ENCODE measurements at regions of chr5 and their contacts with region 1.

Region 1: DNA sequence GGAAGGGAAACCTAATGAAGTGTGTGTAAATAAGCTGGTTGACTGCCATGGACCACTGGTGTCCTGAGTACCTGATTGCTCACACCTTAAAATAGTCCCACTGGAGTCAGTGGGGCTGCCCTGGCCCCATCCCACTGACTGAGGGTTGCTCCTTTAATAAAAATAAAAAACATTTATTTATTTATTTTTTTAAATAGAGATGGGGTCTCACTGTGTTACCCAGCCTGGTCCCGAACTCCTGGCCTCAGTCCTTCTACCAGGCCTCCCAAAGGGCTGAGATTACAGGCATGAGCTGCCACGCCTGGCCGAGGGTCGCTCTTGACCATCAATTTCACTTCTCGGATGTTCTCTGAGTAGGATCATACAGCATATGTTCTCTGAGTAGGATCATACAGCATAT is 394.2 kb upstream of the IRX2 start:
- DNase-seq: no peak
- H3K4me3 ChIP-seq: no peak overlapping the region
- H3K27ac ChIP-seq: no peak overlapping the region
- H3K4me1 ChIP-seq: no peaks in the 10 kb centered on the region
- H3K27me3 ChIP-seq: no peaks in the 10 kb centered on the region
- CTCF ChIP-seq: no peak
- POLR2A ChIP-seq: no peak

Region 2: GRCh38 chr5:3220201-3220936 is 74.7 kb after region 1 on chr5:
- intact Hi-C with region 1: loop called (anchors 2 kb)
- DNase-seq: no peak
- H3K4me3 ChIP-seq: no peak overlapping the region
- H3K27ac ChIP-seq: no peak overlapping the region
- H3K4me1 ChIP-seq: no peaks in the 10 kb centered on the region
- H3K27me3 ChIP-seq: no peaks in the 10 kb centered on the region
- CTCF ChIP-seq: no peak
- POLR2A ChIP-seq: no peak

Measured in breast epithelium (tissue), 4 donors.